ENCODE measurements at regions of chr17 and their contacts with region 1.

Region 1: DNA sequence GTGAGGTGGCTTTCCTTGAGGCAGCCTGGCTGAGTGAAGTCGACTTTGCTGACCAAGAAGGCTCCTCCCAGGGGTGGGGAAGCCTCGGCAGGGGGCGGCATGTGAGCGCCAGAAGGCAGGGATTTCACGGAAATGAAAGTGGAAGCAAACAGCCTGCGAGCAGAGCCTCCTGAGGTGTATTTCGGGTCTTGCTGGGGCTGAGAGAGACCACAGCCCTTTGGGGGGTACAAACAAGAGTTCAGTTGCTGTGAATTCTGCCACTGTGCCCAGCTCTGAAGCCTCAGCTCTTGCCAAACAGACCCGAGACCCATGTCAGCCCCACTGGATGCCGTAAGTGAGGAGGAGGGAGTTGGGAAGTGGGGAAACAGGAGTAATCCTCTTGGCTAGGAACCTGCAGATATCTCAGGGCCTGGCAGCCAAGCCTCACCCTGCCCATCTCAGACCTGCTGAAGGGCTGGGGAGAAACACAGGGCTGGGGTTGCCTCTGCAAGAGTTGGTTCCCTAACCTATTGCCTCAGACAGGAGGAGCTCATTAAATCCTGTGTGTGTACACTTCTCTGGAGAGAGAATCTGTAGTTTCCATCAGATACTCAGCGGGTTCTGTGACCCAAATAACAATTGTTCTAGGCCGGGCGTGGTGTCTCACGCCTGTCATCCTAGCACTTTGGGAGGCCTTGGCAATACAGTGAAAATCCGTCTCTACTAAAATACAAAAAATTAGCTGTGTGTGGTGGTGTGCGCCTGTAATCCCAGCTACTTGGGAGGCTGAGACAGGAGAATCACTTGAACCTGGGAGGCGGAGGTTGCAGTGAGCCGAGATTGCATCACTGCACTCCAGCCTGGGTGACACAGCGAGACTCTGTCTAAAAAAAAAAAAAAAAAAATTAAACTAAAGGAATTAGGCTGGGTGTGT is at the start of gene IFI35:
- DNase-seq: peak; percentile 77 to 91 (median 83)
- ATAC-seq: peak; percentile 99
- H3K4me3 ChIP-seq: peak within 1 kb of the TSS; percentile 93
- H3K4me3 Mint-ChIP-seq: peak within 1 kb of the TSS; percentile 99
- H3K27ac ChIP-seq: peak within 1 kb of the TSS; percentile 75 to 88
- H3K27ac Mint-ChIP-seq: peak within 1 kb of the TSS; percentile 92
- H3K4me1 ChIP-seq: peaks cover 33% of the 10 kb centered on the region
- H3K4me1 Mint-ChIP-seq: peaks cover 18% of the 10 kb centered on the region
- H3K27me3 ChIP-seq: no peaks in the 10 kb centered on the region
- H3K27me3 Mint-ChIP-seq: no peaks in the 10 kb centered on the region
- CTCF ChIP-seq: peak; percentile 72
- total RNA-seq, gene IFI35: 23.0 to 24.7 TPM

Region 2: DNA sequence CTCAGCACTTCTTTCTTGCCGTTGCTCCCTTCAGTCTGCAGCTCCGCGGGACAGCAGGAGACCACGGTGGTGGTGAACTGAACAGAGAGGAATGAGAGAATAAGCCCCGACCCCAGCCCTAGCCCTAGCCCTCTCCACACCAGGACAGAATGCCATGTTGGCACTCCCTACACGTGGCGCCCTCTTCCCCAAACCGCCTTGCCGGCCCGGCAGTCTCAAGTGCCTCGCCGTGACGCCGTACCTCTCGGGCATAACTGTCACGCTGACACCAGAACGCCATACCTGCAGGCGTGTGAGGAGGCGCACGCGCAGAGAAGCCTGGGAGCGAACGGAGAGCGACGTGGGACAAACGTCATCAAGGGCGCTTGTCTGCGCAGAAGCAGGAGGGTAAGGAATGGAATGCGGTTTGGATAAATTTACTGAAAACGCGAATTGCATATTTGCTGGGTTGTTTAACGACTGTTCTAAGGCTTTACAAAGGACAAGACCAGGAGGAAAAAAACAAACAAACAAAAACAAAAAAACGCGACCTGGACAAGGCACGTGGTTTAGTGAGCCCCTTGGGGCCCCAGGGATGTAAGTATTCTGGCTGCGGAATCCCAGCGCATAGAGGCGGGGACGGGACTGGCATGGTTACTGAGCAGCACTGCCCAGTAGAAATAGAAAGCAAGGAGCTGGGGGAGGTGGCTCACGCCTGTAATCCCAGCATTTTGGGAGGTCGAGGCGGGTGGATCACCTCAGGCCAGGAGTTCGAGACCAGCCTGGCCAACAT is 42.5 kb before region 1 on chr17 and contains the start of gene AARSD1:
- CTCF ChIA-PET with region 1: no interaction called
- POLR2A ChIA-PET with region 1: no interaction called
- intact Hi-C with region 1: no loop called
- DNase-seq: peak; percentile 82 to 96 (median 86)
- ATAC-seq: peak; percentile 98
- H3K4me3 ChIP-seq: peak within 1 kb of the TSS; percentile 73
- H3K4me3 Mint-ChIP-seq: peak within 1 kb of the TSS; percentile 86
- H3K27ac ChIP-seq: peak within 1 kb of the TSS; percentile 38 to 54
- H3K27ac Mint-ChIP-seq: peak within 1 kb of the TSS; percentile 79
- H3K4me1 ChIP-seq: peaks cover 20% of the 10 kb centered on the region
- H3K4me1 Mint-ChIP-seq: peaks cover 14% of the 10 kb centered on the region
- H3K27me3 ChIP-seq: no peaks in the 10 kb centered on the region
- H3K27me3 Mint-ChIP-seq: no peaks in the 10 kb centered on the region
- CTCF ChIP-seq: no peak
- total RNA-seq, gene AARSD1: 60.4 to 70.8 TPM

Region 3: DNA sequence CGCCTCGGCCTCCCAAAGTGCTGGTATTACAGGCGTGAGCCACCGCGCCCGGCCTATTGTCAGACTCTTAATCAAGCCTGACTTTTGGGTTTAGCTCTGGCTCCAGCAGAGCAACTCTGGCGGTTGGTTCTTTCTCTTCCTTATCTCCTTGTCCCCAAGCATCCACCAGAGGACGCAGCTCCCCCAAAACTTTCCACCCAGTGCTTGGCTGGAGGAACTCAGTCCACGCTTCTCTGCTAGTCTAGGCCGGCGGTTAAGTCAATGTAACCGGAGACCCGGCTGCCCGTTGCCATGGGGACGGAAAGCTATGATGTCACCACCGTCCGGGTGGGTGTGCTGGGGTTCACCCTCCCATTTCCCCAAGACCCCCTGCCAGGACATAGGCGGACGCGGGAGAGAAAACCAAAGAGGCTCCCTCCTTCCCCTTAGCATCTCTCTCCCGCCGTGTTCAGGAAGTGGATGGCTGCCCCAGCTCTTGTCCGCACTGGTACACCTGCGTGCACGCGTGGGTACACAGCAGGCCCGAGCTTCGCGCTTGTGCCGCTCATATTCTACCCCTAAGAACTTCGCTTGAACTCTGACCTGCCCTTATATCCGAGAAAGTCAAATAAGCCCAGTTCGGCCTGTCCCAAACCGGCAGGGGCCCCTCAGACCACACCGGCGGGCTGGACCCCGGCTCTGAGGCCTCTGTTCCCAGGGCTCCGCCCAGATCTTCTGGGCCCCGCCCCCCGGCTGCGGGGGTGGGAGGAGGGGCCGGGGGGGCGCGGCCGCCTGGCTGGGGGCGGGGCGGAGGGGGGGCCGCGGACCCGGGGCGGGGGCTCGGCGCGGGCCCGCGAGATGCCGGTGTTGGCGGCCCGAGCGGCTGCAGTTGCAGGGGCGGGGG is 17.8 kb after region 1 on chr17 and contains the start of gene RND2:
- CTCF ChIA-PET with region 1: interaction called, 4 read pairs
- POLR2A ChIA-PET with region 1: interaction called, 23 read pairs
- intact Hi-C with region 1: loop called (anchors 2 kb)
- DNase-seq: peak; percentile 60 to 91 (median 71)
- ATAC-seq: peak; percentile 56
- H3K4me3 ChIP-seq: peak within 1 kb of the TSS; percentile 74
- H3K4me3 Mint-ChIP-seq: peak within 1 kb of the TSS; percentile 90
- H3K27ac ChIP-seq: peak within 1 kb of the TSS in 1 of 2 donors; percentile 56
- H3K27ac Mint-ChIP-seq: peak within 1 kb of the TSS; percentile 77
- H3K4me1 ChIP-seq: peaks cover 48% of the 10 kb centered on the region
- H3K4me1 Mint-ChIP-seq: peaks cover 28% of the 10 kb centered on the region
- H3K27me3 ChIP-seq: no peaks in the 10 kb centered on the region
- H3K27me3 Mint-ChIP-seq: no peaks in the 10 kb centered on the region
- CTCF ChIP-seq: peak; percentile 21
- total RNA-seq, gene RND2: 0.27 to 0.28 TPM

Region 4: DNA sequence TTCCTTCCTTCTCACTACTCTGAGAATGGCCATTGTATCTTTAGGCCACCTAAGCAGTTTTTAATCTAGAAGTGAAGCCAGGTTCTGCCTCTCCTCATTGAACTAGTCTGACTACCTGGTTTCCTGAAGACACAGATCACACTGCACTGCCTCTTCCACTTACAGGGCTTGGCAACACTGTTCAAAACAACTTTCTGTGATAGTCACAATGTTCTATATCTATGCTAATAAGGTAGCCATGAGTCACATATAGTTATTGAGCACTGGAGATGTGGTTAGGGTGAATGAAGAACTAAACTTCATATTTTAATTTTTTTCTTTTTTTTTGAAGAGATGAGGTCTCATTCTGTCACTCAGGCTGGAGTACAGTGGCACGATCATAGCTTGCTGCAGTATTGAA is 45.1 kb after region 1 on chr17:
- CTCF ChIA-PET with region 1: no interaction called
- POLR2A ChIA-PET with region 1: no interaction called
- intact Hi-C with region 1: no loop called
- DNase-seq: no peak
- ATAC-seq: no peak
- H3K4me3 ChIP-seq: no peak overlapping the region
- H3K4me3 Mint-ChIP-seq: no peak overlapping the region
- H3K27ac ChIP-seq: no peak overlapping the region
- H3K27ac Mint-ChIP-seq: no peak overlapping the region
- H3K4me1 ChIP-seq: no peaks in the 10 kb centered on the region
- H3K4me1 Mint-ChIP-seq: no peaks in the 10 kb centered on the region
- H3K27me3 ChIP-seq: no peaks in the 10 kb centered on the region
- H3K27me3 Mint-ChIP-seq: no peaks in the 10 kb centered on the region
- CTCF ChIP-seq: no peak

Region 5: DNA sequence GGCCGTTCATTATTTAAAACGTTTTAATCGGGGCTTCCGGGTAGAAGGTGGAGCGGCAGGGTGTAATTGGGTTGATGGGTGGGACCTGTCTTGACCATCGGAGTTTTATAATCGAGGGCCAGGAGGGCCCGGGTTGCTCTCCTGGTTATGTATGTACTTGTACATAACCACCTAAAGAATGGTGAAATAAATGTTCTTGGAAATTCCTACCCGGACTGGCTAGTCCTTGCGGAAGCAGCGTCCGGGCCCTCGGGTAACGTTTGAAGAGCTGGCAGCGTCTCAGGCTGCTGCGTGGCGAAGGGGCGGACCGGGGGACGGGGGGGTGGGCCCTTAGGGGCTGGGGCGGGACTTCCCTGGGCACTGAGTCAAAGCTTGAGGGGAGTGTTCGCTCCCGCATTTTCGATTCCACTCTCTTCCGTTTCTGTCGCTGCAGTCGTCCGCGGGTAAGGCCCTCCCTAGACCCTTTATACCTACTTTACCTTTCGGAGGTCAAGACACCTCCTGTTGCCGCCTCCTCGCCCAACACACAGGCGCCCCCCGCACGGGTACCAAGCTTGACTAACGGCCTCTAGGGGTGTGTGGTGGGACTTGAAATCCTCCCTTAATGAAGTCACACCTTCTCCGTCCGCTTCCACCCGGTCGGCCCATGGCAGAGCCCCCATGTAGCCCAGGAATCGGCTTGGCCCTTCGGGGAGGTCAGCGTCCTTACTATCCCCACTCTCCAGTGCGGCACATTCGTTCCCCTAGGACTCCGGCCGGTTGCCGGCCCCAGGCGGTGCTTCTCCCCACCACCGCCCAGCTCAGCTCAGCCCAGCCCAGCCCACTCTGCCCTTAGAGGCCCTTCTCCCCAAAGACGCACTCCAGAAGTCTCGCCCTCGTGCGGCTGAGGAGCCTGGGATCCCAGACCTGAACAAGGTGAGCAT is 204.8 kb after region 1 on chr17 and contains the start of gene TMEM106A:
- CTCF ChIA-PET with region 1: no interaction called
- POLR2A ChIA-PET with region 1: interaction called, 5 read pairs
- intact Hi-C with region 1: loop called in 1 of 2 experiments (anchors 2 kb)
- DNase-seq: peak; percentile 56 to 88 (median 68)
- ATAC-seq: peak; percentile 90
- H3K4me3 ChIP-seq: peak within 1 kb of the TSS; percentile 69
- H3K4me3 Mint-ChIP-seq: peak within 1 kb of the TSS; percentile 98
- H3K27ac ChIP-seq: peak within 1 kb of the TSS; percentile 72 to 77
- H3K27ac Mint-ChIP-seq: peak within 1 kb of the TSS; percentile 89
- H3K4me1 ChIP-seq: peaks cover 22% of the 10 kb centered on the region
- H3K4me1 Mint-ChIP-seq: peaks cover 38% of the 10 kb centered on the region
- H3K27me3 ChIP-seq: no peaks in the 10 kb centered on the region
- H3K27me3 Mint-ChIP-seq: no peaks in the 10 kb centered on the region
- CTCF ChIP-seq: peak; percentile 61
- total RNA-seq, gene TMEM106A: 6.3 to 6.4 TPM

Region 6: GRCh38 chr17:43338886-43339516 is 332.1 kb after region 1 on chr17:
- CTCF ChIA-PET with region 1: no interaction called
- POLR2A ChIA-PET with region 1: no interaction called
- intact Hi-C with region 1: loop called (anchors 1 kb)
- DNase-seq: peak; percentile 48 to 75 (median 58)
- ATAC-seq: no peak
- H3K4me3 ChIP-seq: no peak overlapping the region
- H3K4me3 Mint-ChIP-seq: no peak overlapping the region
- H3K27ac ChIP-seq: no peak overlapping the region
- H3K27ac Mint-ChIP-seq: no peak overlapping the region
- H3K4me1 ChIP-seq: peaks cover 8% of the 10 kb centered on the region
- H3K4me1 Mint-ChIP-seq: peaks cover 8% of the 10 kb centered on the region
- H3K27me3 ChIP-seq: no peaks in the 10 kb centered on the region
- H3K27me3 Mint-ChIP-seq: no peaks in the 10 kb centered on the region
- CTCF ChIP-seq: peak; percentile 79

Region 7: GRCh38 chr17:43367737-43368242 is 360.9 kb after region 1 on chr17:
- CTCF ChIA-PET with region 1: no interaction called
- POLR2A ChIA-PET with region 1: interaction called, 17 read pairs
- intact Hi-C with region 1: no loop called
- DNase-seq: peak in 2 of 14 experiments; percentile 70 to 88
- ATAC-seq: peak; percentile 47
- H3K4me3 ChIP-seq: peak overlapping the region; percentile 83
- H3K4me3 Mint-ChIP-seq: peak overlapping the region; percentile 95
- H3K27ac ChIP-seq: peak overlapping the region; percentile 86 to 97
- H3K27ac Mint-ChIP-seq: peak overlapping the region; percentile 98
- H3K4me1 ChIP-seq: peaks cover 38% of the 10 kb centered on the region
- H3K4me1 Mint-ChIP-seq: peaks cover 48% of the 10 kb centered on the region
- H3K27me3 ChIP-seq: no peaks in the 10 kb centered on the region
- H3K27me3 Mint-ChIP-seq: no peaks in the 10 kb centered on the region
- CTCF ChIP-seq: no peak

Measured in CD4-positive, alpha-beta T cell (primary cell).